Aorta (tissue), 5 donors: ENCODE measurements at regions of chr2 and their contacts with region 1.

Region 1: DNA sequence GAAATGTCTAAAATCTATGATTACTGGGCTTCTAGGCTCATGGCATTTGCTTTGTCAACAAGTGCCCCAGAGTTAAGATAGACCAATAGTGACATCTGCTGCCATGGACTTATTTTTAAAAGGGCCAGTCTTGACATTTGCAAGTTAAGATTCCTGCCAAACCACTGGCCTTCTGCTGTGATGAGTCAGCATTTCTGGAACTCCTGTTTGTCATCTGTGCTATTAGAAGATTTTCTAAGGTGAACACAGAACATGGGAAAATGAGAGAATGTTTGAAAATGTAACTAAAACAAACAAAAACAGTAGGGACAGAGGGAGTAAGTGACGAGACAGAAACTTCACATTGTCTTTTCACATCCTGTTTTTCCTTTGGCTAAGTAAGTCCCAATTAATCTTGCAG is 93.7 kb upstream of the WDR75 start:
- DNase-seq: no peak
- ATAC-seq: peak; percentile 84
- H3K4me3 ChIP-seq: no peak overlapping the region
- H3K27ac ChIP-seq: no peak overlapping the region
- H3K4me1 ChIP-seq: no peaks in the 10 kb centered on the region
- H3K27me3 ChIP-seq: no peaks in the 10 kb centered on the region

Region 2: GRCh38 chr2:189096769-189097447 is 250.6 kb before region 1 on chr2:
- intact Hi-C with region 1: loop called (anchors 1 to 2 kb)
- DNase-seq: no peak
- ATAC-seq: no peak
- H3K4me3 ChIP-seq: no peak overlapping the region
- H3K27ac ChIP-seq: no peak overlapping the region
- H3K4me1 ChIP-seq: peaks cover 0 to 1% of the 10 kb centered on the region in 2 donors
- H3K27me3 ChIP-seq: no peaks in the 10 kb centered on the region

Region 3: GRCh38 chr2:189109921-189110397 is 237.6 kb before region 1 on chr2:
- intact Hi-C with region 1: loop called in 1 of 2 experiments (anchors 5 kb)
- DNase-seq: no peak
- ATAC-seq: no peak
- H3K4me3 ChIP-seq: no peak overlapping the region
- H3K27ac ChIP-seq: no peak overlapping the region
- H3K4me1 ChIP-seq: no peaks in the 10 kb centered on the region
- H3K27me3 ChIP-seq: no peaks in the 10 kb centered on the region

Region 4: DNA sequence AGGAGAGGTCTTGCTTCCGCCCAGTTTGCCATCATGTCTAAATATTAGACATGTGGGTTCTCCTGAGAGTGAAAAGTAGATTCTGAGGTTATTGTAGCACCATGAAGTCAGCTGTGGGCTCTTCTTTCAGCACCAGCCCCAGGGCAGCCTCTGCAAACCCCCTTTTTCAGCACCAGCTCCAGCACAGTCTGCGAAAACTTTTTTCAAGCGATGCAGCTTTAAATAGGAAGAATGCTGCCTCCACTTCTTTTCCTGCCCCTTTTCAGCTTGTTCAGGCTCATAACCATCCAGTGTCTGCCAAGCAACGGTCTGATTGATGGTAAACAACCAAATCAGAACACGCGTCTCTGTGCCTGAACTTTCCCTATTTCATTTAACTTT is 168.0 kb before region 1 on chr2 and contains the start of gene COL5A2:
- intact Hi-C with region 1: loop called in 1 of 2 experiments (anchors 10 kb)
- DNase-seq: peak; percentile 49 to 75
- ATAC-seq: peak; percentile 91
- H3K4me3 ChIP-seq: peak within 1 kb of the TSS; percentile 100
- H3K27ac ChIP-seq: peak within 1 kb of the TSS; percentile 67 to 85
- H3K4me1 ChIP-seq: no peaks in the 10 kb centered on the region
- H3K27me3 ChIP-seq: no peaks in the 10 kb centered on the region
- total RNA-seq, gene COL5A2: 81.0 to 115 TPM

Region 5: DNA sequence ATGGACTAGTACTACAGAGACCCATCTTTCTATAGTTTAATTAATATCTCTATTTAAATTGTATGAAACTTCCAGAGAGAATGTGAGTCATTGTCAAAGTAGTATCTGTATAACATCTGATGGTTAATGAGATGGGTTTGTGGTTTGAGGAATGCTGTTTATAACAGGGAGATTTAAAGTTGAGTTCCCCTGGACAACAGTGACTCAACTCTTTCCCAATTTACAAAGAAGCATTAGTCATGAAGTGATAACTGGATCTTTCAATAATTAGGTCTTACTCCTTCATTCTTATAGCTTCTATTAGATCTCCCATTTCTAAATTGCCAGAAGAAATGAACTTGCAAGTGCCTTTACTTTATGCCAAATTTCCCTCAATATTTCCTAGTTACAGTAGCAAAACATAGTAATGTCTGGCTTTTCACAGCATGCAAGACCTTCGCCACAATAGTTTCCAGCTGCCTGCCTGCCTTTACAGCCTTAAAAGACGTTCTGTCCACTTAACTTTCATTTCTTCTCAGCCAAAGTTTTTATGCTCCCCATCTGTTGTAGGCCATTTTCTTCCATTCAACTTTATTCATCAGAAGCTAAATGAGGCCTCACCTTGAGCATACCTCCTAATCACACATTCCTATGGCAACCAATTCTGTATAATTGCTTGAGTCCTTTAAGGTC is 46.0 kb after region 1 on chr2:
- intact Hi-C with region 1: no loop called
- DNase-seq: peak in 1 of 2 donors; percentile 51
- ATAC-seq: peak; percentile 69
- H3K4me3 ChIP-seq: no peak overlapping the region
- H3K27ac ChIP-seq: no peak overlapping the region
- H3K4me1 ChIP-seq: no peaks in the 10 kb centered on the region
- H3K27me3 ChIP-seq: no peaks in the 10 kb centered on the region

Region 6: GRCh38 chr2:189444322-189444721 is 96.8 kb after region 1 on chr2:
- intact Hi-C with region 1: no loop called
- DNase-seq: no peak
- ATAC-seq: no peak
- H3K4me3 ChIP-seq: no peak overlapping the region
- H3K27ac ChIP-seq: no peak overlapping the region
- H3K4me1 ChIP-seq: peaks cover 2 to 10% of the 10 kb centered on the region in 2 donors
- H3K27me3 ChIP-seq: no peaks in the 10 kb centered on the region